CD4-positive, alpha-beta T cell (primary cell): ENCODE measurements at regions of chr17 and their contacts with region 1.

Region 1: GRCh38 chr17:42276359-42276608 is at the start of gene STAT5B:
- DNase-seq: peak; percentile 33 to 89 (median 63)
- ATAC-seq: peak; percentile 32
- H3K4me3 ChIP-seq: peak within 1 kb of the TSS; percentile 91
- H3K4me3 Mint-ChIP-seq: peak within 1 kb of the TSS; percentile 92
- H3K27ac ChIP-seq: peak within 1 kb of the TSS; percentile 67 to 76
- H3K27ac Mint-ChIP-seq: peak within 1 kb of the TSS; percentile 91
- H3K4me1 ChIP-seq: peaks cover 16% of the 10 kb centered on the region
- H3K4me1 Mint-ChIP-seq: peaks cover 49% of the 10 kb centered on the region
- H3K27me3 ChIP-seq: no peaks in the 10 kb centered on the region
- H3K27me3 Mint-ChIP-seq: no peaks in the 10 kb centered on the region
- CTCF ChIP-seq: no peak
- total RNA-seq, gene STAT5B: 99.4 to 104 TPM

Region 2: GRCh38 chr17:42120770-42121769 is 155.2 kb before region 1 on chr17 and contains the start of gene KAT2A:
- CTCF ChIA-PET with region 1: no interaction called
- POLR2A ChIA-PET with region 1: no interaction called
- intact Hi-C with region 1: loop called in 1 of 2 experiments (anchors 5 kb)
- DNase-seq: peak; percentile 59 to 89 (median 72)
- ATAC-seq: peak; percentile 88
- H3K4me3 ChIP-seq: peak within 1 kb of the TSS; percentile 48
- H3K4me3 Mint-ChIP-seq: peak within 1 kb of the TSS; percentile 82
- H3K27ac ChIP-seq: no peak within 1 kb of the TSS
- H3K27ac Mint-ChIP-seq: no peak within 1 kb of the TSS
- H3K4me1 ChIP-seq: peaks cover 28% of the 10 kb centered on the region
- H3K4me1 Mint-ChIP-seq: peaks cover 25% of the 10 kb centered on the region
- H3K27me3 ChIP-seq: no peaks in the 10 kb centered on the region
- H3K27me3 Mint-ChIP-seq: no peaks in the 10 kb centered on the region
- CTCF ChIP-seq: no peak
- total RNA-seq, gene KAT2A: 38.5 to 42.4 TPM

Region 3: GRCh38 chr17:42287926-42288802 is 11.9 kb after region 1 on chr17 and contains the start of gene STAT5A:
- CTCF ChIA-PET with region 1: interaction called, 4 read pairs
- POLR2A ChIA-PET with region 1: interaction called, 136 read pairs
- intact Hi-C with region 1: loop called (anchors 1 kb)
- DNase-seq: peak; percentile 60 to 92 (median 76)
- ATAC-seq: peak; percentile 81
- H3K4me3 ChIP-seq: peak within 1 kb of the TSS; percentile 86
- H3K4me3 Mint-ChIP-seq: peak within 1 kb of the TSS; percentile 92
- H3K27ac ChIP-seq: peak within 1 kb of the TSS; percentile 87 to 89
- H3K27ac Mint-ChIP-seq: peak within 1 kb of the TSS; percentile 95
- H3K4me1 ChIP-seq: peaks cover 61% of the 10 kb centered on the region
- H3K4me1 Mint-ChIP-seq: peaks cover 51% of the 10 kb centered on the region
- H3K27me3 ChIP-seq: no peaks in the 10 kb centered on the region
- H3K27me3 Mint-ChIP-seq: no peaks in the 10 kb centered on the region
- CTCF ChIP-seq: no peak
- total RNA-seq, gene STAT5A: 141 to 150 TPM

Region 4: DNA sequence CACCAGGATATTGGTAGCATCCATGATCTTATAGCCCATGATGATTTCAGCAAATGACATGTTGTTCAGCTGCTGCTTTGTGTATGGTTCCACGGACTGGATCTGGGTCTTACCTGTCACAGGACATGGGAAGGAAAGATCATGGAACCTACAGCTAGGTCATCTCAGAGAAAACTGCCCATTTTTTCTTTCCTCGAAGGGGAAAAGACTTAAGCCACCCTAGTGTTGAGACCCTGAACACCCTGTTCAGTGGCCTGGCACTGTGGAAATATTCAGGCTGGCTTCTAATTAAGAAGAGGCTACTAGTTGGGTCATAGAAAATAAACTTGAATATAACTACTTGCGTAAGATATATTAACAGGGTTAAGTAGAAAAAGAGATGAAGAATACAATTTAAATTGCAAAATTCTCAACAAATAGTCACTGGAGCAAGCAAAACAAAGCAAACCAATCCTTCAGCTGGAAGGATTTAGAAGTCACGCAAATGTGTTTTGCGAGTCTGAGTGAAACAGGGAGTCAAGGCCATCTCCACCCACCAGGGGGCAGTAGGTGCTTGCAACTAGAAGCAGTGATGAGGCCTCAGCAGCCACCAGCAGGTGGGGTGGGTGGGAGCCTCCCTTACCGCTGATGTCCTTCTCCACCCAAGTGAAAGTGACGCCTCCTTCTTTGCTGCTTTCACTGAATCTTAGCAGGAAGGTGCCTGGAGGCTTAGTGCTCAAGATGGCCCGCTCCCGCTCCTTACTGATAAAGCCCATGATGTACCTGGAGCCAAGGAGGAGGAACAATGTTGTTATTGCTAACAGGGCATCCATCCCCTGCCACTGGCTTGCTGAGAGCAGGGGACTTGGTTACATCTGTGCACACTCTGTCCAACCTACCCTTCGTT is 46.3 kb after region 1 on chr17:
- CTCF ChIA-PET with region 1: no interaction called
- POLR2A ChIA-PET with region 1: no interaction called
- intact Hi-C with region 1: no loop called
- DNase-seq: peak; percentile 89 to 98 (median 95)
- ATAC-seq: peak; percentile 97
- H3K4me3 ChIP-seq: no peak overlapping the region
- H3K4me3 Mint-ChIP-seq: no peak overlapping the region
- H3K27ac ChIP-seq: peak overlapping the region in 1 of 2 donors; percentile 18
- H3K27ac Mint-ChIP-seq: peak overlapping the region; percentile 76
- H3K4me1 ChIP-seq: peaks cover 26% of the 10 kb centered on the region
- H3K4me1 Mint-ChIP-seq: peaks cover 37% of the 10 kb centered on the region
- H3K27me3 ChIP-seq: no peaks in the 10 kb centered on the region
- H3K27me3 Mint-ChIP-seq: no peaks in the 10 kb centered on the region
- CTCF ChIP-seq: peak; percentile 100

Region 5: GRCh38 chr17:42598905-42599304 is 322.6 kb after region 1 on chr17:
- CTCF ChIA-PET with region 1: no interaction called
- POLR2A ChIA-PET with region 1: no interaction called
- intact Hi-C with region 1: no loop called
- DNase-seq: no peak
- ATAC-seq: no peak
- H3K4me3 ChIP-seq: no peak overlapping the region
- H3K4me3 Mint-ChIP-seq: no peak overlapping the region
- H3K27ac ChIP-seq: no peak overlapping the region
- H3K27ac Mint-ChIP-seq: peak overlapping the region; percentile 9
- H3K4me1 ChIP-seq: peaks cover 29% of the 10 kb centered on the region
- H3K4me1 Mint-ChIP-seq: peaks cover 41% of the 10 kb centered on the region
- H3K27me3 ChIP-seq: no peaks in the 10 kb centered on the region
- H3K27me3 Mint-ChIP-seq: no peaks in the 10 kb centered on the region
- CTCF ChIP-seq: no peak

Region 6: DNA sequence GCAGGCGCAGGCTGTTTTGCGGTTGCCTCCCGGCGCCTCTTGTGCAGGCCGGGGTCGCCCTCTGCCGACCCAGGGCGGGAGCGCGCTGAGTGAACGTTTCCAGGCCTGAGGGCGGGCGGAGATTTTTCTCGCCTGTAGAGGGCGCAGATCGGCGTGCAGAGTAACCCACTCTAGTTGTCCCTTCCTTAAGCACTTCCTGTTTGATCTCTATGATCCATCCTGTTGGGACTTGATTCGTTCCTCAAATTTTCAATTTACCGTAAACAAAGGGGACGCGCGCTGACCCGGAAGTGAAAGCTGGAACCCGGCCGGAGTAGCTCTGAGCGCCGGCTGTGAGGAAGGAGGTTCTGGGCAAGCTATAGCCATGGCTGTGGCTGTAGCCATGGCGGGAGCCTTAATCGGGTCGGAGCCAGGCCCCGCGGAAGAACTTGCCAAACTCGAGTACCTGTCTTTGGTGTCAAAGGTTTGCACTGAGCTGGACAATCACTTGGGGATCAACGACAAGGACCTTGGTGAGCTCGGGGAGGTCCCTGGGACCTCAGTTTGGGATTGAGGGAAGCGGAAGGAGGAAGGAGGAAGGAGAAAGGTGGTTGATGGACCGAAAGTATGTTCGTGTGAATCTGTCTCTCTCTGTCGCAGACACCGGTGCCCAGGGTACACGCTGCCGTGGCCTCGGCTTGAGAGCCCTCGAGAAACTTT is 1207.5 kb after region 1 on chr17 and contains the start of gene DHX8:
- CTCF ChIA-PET with region 1: no interaction called
- POLR2A ChIA-PET with region 1: no interaction called
- intact Hi-C with region 1: no loop called
- DNase-seq: peak; percentile 95 to 99 (median 99)
- ATAC-seq: peak; percentile 97
- H3K4me3 ChIP-seq: peak within 1 kb of the TSS; percentile 88
- H3K4me3 Mint-ChIP-seq: peak within 1 kb of the TSS; percentile 99
- H3K27ac ChIP-seq: peak within 1 kb of the TSS; percentile 37 to 70
- H3K27ac Mint-ChIP-seq: peak within 1 kb of the TSS; percentile 96
- H3K4me1 ChIP-seq: peaks cover 29% of the 10 kb centered on the region
- H3K4me1 Mint-ChIP-seq: peaks cover 36% of the 10 kb centered on the region
- H3K27me3 ChIP-seq: no peaks in the 10 kb centered on the region
- H3K27me3 Mint-ChIP-seq: no peaks in the 10 kb centered on the region
- CTCF ChIP-seq: peak; percentile 100
- total RNA-seq, gene DHX8: 88.8 to 106 TPM